H1 (cell line): ENCODE measurements at regions of chr10 and their contacts with region 1.

Region 1: GRCh38 chr10:91006001-91006751 is 85.3 kb upstream of the ANKRD1 start:
- DNase-seq: peak in 1 of 2 experiments; percentile 76
- H3K4me3 ChIP-seq: no peak overlapping the region
- H3K27ac ChIP-seq: no peak overlapping the region
- H3K4me1 ChIP-seq: no peaks in the 10 kb centered on the region
- H3K27me3 ChIP-seq: peaks cover 0 to 2% (median 0%) of the 10 kb centered on the region in 4 experiments; a peak in 1 of 7 replicates
- CTCF ChIP-seq: peak; percentile 23 to 87 (median 73)
- EP300 ChIP-seq: no peak
- POLR2A ChIP-seq: no peak
- RAD21 ChIP-seq: peak; percentile 92 to 93

Region 2: GRCh38 chr10:90912174-90912573 is 94.0 kb before region 1 on chr10:
- CTCF ChIA-PET with region 1: interaction called, 19 read pairs
- POLR2A ChIA-PET with region 1: no interaction called
- DNase-seq: no peak
- H3K4me3 ChIP-seq: no peak overlapping the region
- H3K27ac ChIP-seq: no peak overlapping the region
- H3K4me1 ChIP-seq: no peaks in the 10 kb centered on the region
- H3K27me3 ChIP-seq: peaks cover 32 to 49% (median 47%) of the 10 kb centered on the region in 4 experiments
- CTCF ChIP-seq: no peak
- EP300 ChIP-seq: no peak
- POLR2A ChIP-seq: no peak
- RAD21 ChIP-seq: no peak

Region 3: GRCh38 chr10:90985321-90985933 is 20.7 kb before region 1 on chr10:
- CTCF ChIA-PET with region 1: interaction called, 11 read pairs
- POLR2A ChIA-PET with region 1: interaction called, 3 read pairs
- DNase-seq: no peak
- H3K4me3 ChIP-seq: no peak overlapping the region
- H3K27ac ChIP-seq: no peak overlapping the region
- H3K4me1 ChIP-seq: no peaks in the 10 kb centered on the region; a peak in 1 of 7 replicates
- H3K27me3 ChIP-seq: peaks cover 0 to 2% (median 1%) of the 10 kb centered on the region in 4 experiments; a peak in 3 of 7 replicates
- CTCF ChIP-seq: no peak
- EP300 ChIP-seq: no peak
- POLR2A ChIP-seq: no peak
- RAD21 ChIP-seq: no peak

Region 4: DNA sequence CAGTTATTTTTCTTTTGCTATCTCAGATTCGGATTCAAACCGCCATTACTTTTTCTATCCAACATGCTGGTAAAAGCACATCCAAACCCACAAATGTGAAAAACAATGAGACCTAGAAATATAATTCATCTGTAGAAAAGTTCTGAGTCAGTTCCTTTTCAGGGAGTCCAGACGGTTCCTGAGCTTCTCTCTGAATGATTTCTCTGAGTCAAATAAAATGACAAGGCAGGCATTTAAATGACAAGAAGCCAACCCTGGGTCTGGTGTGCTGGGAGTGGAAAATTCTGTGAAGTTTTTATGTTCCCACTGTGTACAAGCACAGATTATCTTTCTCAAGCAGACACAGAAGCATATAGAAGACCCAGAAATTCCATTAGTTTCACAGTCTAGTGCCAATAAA is 11.0 kb after region 1 on chr10:
- CTCF ChIA-PET with region 1: interaction called, 69 read pairs
- POLR2A ChIA-PET with region 1: no interaction called
- DNase-seq: no peak
- H3K4me3 ChIP-seq: no peak overlapping the region
- H3K27ac ChIP-seq: no peak overlapping the region
- H3K4me1 ChIP-seq: no peaks in the 10 kb centered on the region
- H3K27me3 ChIP-seq: no peaks in the 10 kb centered on the region; a peak in 1 of 7 replicates
- CTCF ChIP-seq: no peak
- EP300 ChIP-seq: no peak
- POLR2A ChIP-seq: no peak
- RAD21 ChIP-seq: no peak

Region 5: GRCh38 chr10:91034494-91035159 is 28.5 kb after region 1 on chr10:
- CTCF ChIA-PET with region 1: interaction called, 18 read pairs
- POLR2A ChIA-PET with region 1: no interaction called
- DNase-seq: no peak
- H3K4me3 ChIP-seq: no peak overlapping the region
- H3K27ac ChIP-seq: no peak overlapping the region
- H3K4me1 ChIP-seq: peaks cover 0 to 9% (median 4%) of the 10 kb centered on the region in 4 experiments; a peak in 4 of 7 replicates
- H3K27me3 ChIP-seq: no peaks in the 10 kb centered on the region
- CTCF ChIP-seq: no peak
- EP300 ChIP-seq: no peak
- POLR2A ChIP-seq: no peak
- RAD21 ChIP-seq: no peak

Region 6: DNA sequence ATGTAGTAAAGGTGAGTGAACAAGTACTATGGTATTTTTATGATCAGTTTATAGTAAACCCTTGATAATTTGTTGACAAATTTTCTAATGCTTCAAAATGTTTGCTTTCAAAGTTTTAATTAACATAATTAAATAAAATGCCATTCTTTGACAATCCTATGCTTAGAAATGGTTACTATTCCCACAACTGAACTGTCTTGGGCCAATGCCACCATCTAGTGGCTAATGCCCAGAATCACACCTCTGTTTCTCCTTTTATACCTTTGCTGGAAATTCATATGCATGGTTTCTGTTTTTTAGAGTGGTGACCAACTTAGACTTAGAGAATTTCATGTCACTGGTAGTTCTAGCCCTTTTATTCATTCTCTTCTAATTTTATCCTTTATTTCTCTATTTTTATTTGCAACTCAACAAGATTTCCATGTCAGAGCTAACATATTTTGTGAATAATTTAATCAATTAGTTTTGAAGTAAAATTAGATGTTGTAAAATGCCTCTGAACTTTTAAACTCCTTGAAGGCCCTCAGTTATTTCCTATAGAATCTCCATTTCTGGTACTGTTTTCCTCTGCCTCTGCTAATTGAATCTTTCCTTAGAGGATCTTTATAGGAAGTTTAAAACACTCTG is 245.4 kb after region 1 on chr10:
- CTCF ChIA-PET with region 1: interaction called, 125 read pairs
- POLR2A ChIA-PET with region 1: no interaction called
- DNase-seq: no peak
- H3K4me3 ChIP-seq: no peak overlapping the region
- H3K27ac ChIP-seq: no peak overlapping the region
- H3K4me1 ChIP-seq: peaks cover 0 to 4% (median 0%) of the 10 kb centered on the region in 4 experiments; a peak in 2 of 7 replicates
- H3K27me3 ChIP-seq: no peaks in the 10 kb centered on the region
- CTCF ChIP-seq: peak in 2 of 3 experiments; percentile 76 to 81; a peak in 3 of 4 replicates
- EP300 ChIP-seq: no peak
- POLR2A ChIP-seq: no peak
- RAD21 ChIP-seq: peak; percentile 95 to 96